Right cardiac atrium (tissue), 5 donors: ENCODE measurements at regions of chr10 and their contacts with region 1.

Region 1: GRCh38 chr10:44386546-44387052 is 1.7 kb upstream of the CXCL12 start:
- DNase-seq: peak; percentile 75 to 91 (median 89)
- ATAC-seq: peak; percentile 82 to 89
- H3K4me3 ChIP-seq: no peak overlapping the region
- H3K27ac ChIP-seq: no peak overlapping the region
- H3K4me1 ChIP-seq: no peaks in the 10 kb centered on the region
- H3K27me3 ChIP-seq: no peaks in the 10 kb centered on the region

Region 2: DNA sequence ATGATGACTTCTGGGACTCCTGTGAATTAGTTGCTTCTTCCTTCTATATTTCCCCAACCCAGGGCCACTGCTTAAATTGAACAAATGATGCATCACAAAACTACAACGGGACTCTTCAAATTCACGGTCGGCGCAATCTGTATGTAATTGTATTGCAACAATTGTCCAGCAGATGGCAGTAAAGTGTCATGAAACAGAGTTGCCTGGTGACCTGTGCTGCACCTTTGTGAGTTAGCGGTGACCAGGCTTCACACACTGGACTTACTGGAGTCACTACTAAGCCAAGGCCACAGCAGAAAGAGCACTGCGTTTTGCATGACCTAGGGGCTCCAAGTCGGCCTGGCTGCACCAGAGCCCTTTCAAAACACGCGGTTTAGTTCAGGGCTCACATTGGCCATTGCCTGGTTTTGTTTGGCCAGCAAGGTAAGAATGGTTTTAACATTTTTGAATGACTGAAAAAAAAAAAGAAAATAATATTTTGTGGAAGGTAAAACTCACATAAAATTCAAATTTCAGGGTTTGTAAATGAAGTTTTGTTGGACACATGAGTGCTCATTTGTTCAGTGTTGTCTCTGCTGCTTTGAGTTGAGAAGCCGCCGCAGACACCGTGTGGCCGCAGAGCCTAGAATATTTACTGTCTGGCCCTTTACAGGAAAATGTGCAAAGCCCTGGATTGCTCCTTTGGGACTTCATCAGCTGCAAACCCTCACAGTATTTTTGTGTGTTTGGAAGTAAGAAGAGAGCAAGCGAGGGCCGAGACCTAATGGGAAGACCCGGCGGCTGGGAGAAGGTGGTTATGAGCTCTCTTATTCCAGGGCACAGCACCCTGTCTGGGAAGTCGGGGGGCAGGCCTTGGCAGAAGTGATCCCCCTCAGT is 714.7 kb before region 1 on chr10:
- intact Hi-C with region 1: loop called (anchors 2 to 5 kb)
- DNase-seq: peak in 2 of 3 donors; percentile 38 to 71
- ATAC-seq: peak; percentile 51 to 62
- H3K4me3 ChIP-seq: no peak overlapping the region
- H3K27ac ChIP-seq: no peak overlapping the region
- H3K4me1 ChIP-seq: no peaks in the 10 kb centered on the region
- H3K27me3 ChIP-seq: no peaks in the 10 kb centered on the region

Region 3: DNA sequence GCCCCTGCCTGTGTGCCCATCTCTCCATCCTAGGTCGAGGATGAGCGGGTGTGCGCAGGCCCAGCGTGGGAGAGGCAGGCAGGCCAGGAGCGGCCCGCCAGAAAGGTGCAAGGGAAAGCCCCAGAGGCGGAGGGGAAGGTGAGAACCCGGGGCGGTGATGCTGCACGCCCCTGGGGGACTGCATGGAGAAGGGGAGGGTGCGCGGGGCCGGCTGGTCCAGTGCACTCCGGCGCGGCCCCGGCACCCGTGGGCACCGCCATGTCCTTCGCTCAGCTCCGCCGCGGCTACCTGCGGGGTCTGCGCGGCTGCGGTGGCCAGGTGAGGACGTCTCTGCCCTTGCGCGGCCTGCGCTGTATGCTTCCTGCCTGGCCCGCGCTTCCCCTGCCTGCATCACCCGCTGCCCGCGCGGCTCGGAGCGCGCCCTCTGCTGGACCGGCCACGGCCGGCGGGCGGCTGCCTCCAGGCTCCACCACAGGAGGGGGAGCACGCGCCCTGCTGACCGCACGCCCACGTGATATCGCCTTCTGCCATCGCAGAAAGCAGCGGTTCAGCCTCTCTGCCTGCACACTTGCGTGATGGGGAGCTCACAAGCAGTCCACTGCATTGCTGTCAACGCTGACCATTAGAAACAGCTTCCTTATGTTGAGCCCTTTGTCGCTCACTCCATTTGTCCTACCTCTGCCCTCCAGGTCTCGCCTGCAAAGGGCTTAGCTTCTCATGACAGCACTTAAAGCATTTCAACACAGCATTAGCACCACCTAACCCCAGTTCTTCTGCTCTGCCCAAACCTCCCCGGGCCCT is 75.6 kb before region 1 on chr10:
- intact Hi-C with region 1: loop called in 2 of 4 experiments (anchors 5 to 10 kb)
- DNase-seq: peak; percentile 89 to 96 (median 96)
- ATAC-seq: peak; percentile 97 to 98
- H3K4me3 ChIP-seq: peak overlapping the region; percentile 16
- H3K27ac ChIP-seq: no peak overlapping the region
- H3K4me1 ChIP-seq: no peaks in the 10 kb centered on the region
- H3K27me3 ChIP-seq: no peaks in the 10 kb centered on the region

Region 4: DNA sequence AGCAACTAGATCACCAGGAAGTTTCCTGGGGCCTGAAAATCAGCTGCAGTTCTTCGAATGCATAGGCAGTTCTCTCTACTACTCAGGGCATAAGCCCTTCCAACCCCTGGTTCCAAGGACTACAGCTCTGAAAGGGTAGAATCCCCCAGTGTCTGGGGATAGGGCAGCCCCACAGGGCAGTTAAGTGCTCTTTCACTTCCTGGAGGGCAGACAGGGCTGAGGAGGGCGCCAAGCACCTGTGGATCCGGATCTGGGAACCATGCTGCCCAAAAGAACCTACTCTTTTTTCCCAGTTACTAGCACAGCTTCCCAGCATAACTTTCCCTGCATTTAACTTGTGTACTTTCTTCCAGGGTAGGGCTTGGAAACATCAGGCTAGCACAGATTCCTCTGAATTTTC is 42.8 kb before region 1 on chr10:
- intact Hi-C with region 1: no loop called
- DNase-seq: no peak
- ATAC-seq: no peak
- H3K4me3 ChIP-seq: no peak overlapping the region
- H3K27ac ChIP-seq: no peak overlapping the region
- H3K4me1 ChIP-seq: no peaks in the 10 kb centered on the region
- H3K27me3 ChIP-seq: no peaks in the 10 kb centered on the region

Region 5: GRCh38 chr10:44857363-44858016 is 470.9 kb after region 1 on chr10:
- intact Hi-C with region 1: loop called (anchors 2 to 10 kb)
- DNase-seq: peak; percentile 72 to 90 (median 88)
- ATAC-seq: peak; percentile 87 to 89
- H3K4me3 ChIP-seq: no peak overlapping the region
- H3K27ac ChIP-seq: no peak overlapping the region
- H3K4me1 ChIP-seq: no peaks in the 10 kb centered on the region
- H3K27me3 ChIP-seq: no peaks in the 10 kb centered on the region

Region 6: DNA sequence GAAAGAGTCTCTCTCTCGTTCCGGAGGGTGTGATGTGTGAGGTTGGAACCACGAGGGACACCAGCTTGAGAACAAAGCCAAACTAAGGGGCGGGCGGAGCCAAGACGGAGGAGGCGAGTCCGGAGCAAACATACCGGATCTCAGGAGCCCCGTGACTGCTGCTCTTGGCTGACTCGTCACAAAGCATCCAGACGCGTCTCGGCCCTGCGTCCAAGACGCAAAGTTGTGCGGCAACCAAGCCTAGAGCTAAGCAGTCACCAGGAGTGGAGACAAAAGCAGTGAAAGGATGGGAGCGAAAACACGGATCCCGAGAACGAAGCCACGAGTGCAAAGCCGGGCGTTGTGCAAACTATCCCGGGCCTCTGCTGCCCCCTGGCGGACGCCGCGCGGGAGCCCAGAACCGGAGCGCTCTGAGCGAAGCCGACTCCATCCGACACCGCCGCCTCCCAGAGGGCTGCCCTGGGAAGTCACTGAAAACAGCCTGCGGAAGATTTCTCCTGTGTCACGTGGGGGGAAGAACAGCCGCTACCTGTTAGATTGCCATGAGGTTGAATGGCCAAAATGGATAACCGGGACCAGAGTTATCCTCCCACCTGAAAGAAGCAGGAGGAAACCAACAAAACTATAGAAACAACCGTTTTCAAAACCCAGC is 478.2 kb after region 1 on chr10:
- intact Hi-C with region 1: loop called (anchors 2 to 10 kb)
- DNase-seq: peak; percentile 92 to 97 (median 97)
- ATAC-seq: peak; percentile 96 to 97
- H3K4me3 ChIP-seq: peak overlapping the region; percentile 44
- H3K27ac ChIP-seq: peak overlapping the region; percentile 21
- H3K4me1 ChIP-seq: no peaks in the 10 kb centered on the region
- H3K27me3 ChIP-seq: no peaks in the 10 kb centered on the region